Activated T-helper 1 cell treated with anti-CD3 and anti-CD28 coated beads, Interleukin-12 subunit alpha, Interleukin-12 subunit beta, Interleukin-2, Interleukin-4 antibody, amounts not matched to agents 30 ng/mL and 10 ng/mL and 1 ng/mL, durations not matched to agents 14 hours and 24 hours and 36 hours (primary cell): ENCODE measurements at regions of chrX and their contacts with region 1.

Region 1: GRCh38 chrX:149962859-149963757 is 24.8 kb upstream of the EOLA2 start:
- DNase-seq: no peak
- H3K4me3 Mint-ChIP-seq: no peak overlapping the region
- H3K27ac Mint-ChIP-seq: no peak overlapping the region
- H3K4me1 Mint-ChIP-seq: no peaks in the 10 kb centered on the region
- H3K27me3 Mint-ChIP-seq: no peaks in the 10 kb centered on the region

Region 2: DNA sequence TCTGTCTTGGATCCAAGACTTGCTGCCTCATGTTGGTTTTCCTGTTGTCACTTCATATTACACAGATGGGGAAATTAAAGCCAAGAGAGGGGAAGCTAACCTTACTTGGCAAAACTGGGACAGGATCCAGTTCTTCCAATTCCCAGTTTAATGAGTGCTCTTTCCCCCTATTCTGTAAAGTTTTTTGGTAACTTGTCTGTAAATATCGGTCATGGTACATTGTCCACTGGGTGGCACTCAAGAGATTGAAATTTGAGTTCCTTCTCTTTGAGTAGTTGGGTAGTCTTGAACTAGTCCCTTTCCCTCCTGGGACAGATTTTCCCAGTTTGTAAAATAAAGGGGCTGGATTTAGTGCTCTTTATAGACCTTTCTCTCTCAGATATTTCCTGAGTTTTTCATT is 12.4 kb before region 1 on chrX:
- intact Hi-C with region 1: no loop called
- DNase-seq: no peak
- H3K4me3 Mint-ChIP-seq: no peak overlapping the region
- H3K27ac Mint-ChIP-seq: no peak overlapping the region
- H3K4me1 Mint-ChIP-seq: no peaks in the 10 kb centered on the region
- H3K27me3 Mint-ChIP-seq: no peaks in the 10 kb centered on the region

Region 3: GRCh38 chrX:150063674-150064073 is 100.6 kb after region 1 on chrX:
- intact Hi-C with region 1: no loop called
- DNase-seq: no peak
- H3K4me3 Mint-ChIP-seq: no peak overlapping the region
- H3K27ac Mint-ChIP-seq: no peak overlapping the region
- H3K4me1 Mint-ChIP-seq: no peaks in the 10 kb centered on the region
- H3K27me3 Mint-ChIP-seq: peaks cover 2% of the 10 kb centered on the region

Region 4: DNA sequence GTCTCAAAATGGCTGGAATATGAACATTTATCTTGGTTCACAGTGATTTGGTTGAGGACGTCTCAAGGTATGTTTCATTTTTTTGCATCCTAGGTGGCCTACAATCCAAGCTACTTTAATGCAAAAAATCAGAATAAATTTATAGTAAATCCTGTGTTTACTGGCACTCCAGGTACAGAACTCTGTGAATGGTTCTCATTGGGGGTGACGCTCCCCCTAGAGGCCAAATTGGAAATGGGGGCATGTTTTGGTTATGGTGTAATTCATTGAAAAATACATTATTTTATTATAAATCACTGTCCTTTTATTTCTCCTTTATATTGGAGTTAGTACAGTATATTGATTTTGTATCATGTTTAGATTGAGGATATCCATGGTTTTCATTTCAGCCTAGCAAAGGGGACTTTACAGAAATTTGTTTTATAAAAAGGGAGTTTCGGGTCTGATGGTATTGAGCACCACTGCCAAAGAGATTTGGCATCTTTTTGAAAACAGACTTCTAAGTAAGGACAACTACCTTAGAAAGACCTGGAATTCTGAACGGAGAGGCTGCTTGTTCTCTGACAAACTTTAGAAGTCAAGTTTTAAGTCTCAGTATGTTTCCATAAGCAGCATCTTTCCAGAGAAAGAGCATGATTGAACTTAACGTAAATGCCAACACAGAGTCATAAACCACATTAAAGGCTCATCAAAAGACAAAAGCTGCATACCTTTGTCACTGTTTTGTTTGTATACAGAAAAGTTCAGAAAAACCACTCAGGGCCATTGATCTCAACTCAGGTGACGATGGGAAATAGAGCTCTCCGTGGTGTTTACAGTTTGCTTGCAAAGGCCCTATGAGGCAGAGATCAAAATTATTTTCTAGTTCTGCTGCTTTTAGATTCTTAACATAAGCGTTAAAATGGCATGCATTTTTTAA is 624.7 kb after region 1 on chrX:
- intact Hi-C with region 1: loop called (anchors 5 kb)
- DNase-seq: no peak
- H3K4me3 Mint-ChIP-seq: no peak overlapping the region
- H3K27ac Mint-ChIP-seq: no peak overlapping the region
- H3K4me1 Mint-ChIP-seq: peaks cover 25% of the 10 kb centered on the region
- H3K27me3 Mint-ChIP-seq: no peaks in the 10 kb centered on the region

Region 5: GRCh38 chrX:150683536-150684146 is 720.5 kb after region 1 on chrX:
- intact Hi-C with region 1: loop called (anchors 2 kb)
- DNase-seq: no peak
- H3K4me3 Mint-ChIP-seq: no peak overlapping the region
- H3K27ac Mint-ChIP-seq: no peak overlapping the region
- H3K4me1 Mint-ChIP-seq: peaks cover 9% of the 10 kb centered on the region
- H3K27me3 Mint-ChIP-seq: no peaks in the 10 kb centered on the region

Region 6: GRCh38 chrX:151099001-151099400 is 1135.9 kb after region 1 on chrX:
- intact Hi-C with region 1: no loop called
- DNase-seq: no peak
- H3K4me3 Mint-ChIP-seq: no peak overlapping the region
- H3K27ac Mint-ChIP-seq: no peak overlapping the region
- H3K4me1 Mint-ChIP-seq: no peaks in the 10 kb centered on the region
- H3K27me3 Mint-ChIP-seq: peaks cover 5% of the 10 kb centered on the region